MCF 10A (cell line): ENCODE measurements at regions of chr2 and their contacts with region 1.

Region 1: GRCh38 chr2:12702305-12703121 is 14.2 kb upstream of the TRIB2 start:
- DNase-seq: peak; percentile 91
- H3K4me3 Mint-ChIP-seq: peak overlapping the region; percentile 40
- H3K27ac Mint-ChIP-seq: peak overlapping the region; percentile 89
- H3K4me1 Mint-ChIP-seq: peaks cover 22% of the 10 kb centered on the region
- H3K27me3 Mint-ChIP-seq: no peaks in the 10 kb centered on the region
- CTCF ChIP-seq: no peak

Region 2: DNA sequence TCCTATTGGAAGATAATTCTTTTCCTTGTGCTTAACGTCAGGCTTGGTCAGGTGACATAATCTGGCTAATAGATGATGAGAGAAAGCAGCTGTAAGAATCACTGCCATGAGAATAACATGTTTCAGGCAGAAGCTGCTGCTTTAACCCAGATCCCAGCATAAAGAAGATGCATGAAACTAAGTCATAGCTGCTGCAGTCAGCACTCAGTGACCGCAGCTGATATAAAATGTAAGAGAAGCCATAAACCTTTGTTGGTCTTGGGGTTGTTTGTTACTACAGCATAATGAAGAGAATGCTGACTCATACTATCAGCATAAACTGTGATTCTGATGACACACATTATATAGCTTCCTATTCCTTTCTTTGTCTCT is 260.1 kb before region 1 on chr2:
- CTCF ChIA-PET with region 1: no interaction called
- POLR2A ChIA-PET with region 1: no interaction called
- intact Hi-C with region 1: loop called (anchors 5 kb)
- DNase-seq: no peak
- H3K4me3 Mint-ChIP-seq: no peak overlapping the region
- H3K27ac Mint-ChIP-seq: no peak overlapping the region
- H3K4me1 Mint-ChIP-seq: peaks cover 6% of the 10 kb centered on the region
- H3K27me3 Mint-ChIP-seq: no peaks in the 10 kb centered on the region
- CTCF ChIP-seq: no peak

Region 3: DNA sequence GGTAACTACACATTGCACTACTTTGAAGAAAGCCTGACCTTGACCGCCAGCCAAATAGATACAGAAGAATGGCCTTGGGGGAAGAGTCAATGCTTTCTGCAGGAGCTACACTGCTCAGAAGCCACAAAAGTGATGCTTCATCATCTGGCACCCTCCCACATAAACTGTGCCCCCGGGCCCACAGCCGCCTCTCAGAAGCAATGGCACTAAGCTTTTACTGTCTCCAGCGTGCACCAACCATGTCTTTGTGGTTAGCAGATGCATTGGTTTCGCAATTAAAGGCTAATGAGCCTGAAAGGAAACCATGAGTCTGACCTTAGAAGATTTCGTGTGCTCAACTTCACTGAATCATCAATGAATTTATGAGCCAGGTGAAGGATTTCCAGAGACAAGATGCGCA is 195.2 kb before region 1 on chr2:
- CTCF ChIA-PET with region 1: no interaction called
- POLR2A ChIA-PET with region 1: interaction called, 3 read pairs
- intact Hi-C with region 1: loop called (anchors 5 kb)
- DNase-seq: peak; percentile 99
- H3K4me3 Mint-ChIP-seq: no peak overlapping the region
- H3K27ac Mint-ChIP-seq: peak overlapping the region; percentile 22
- H3K4me1 Mint-ChIP-seq: peaks cover 38% of the 10 kb centered on the region
- H3K27me3 Mint-ChIP-seq: no peaks in the 10 kb centered on the region
- CTCF ChIP-seq: no peak

Region 4: GRCh38 chr2:12534646-12535263 is 167.8 kb before region 1 on chr2:
- CTCF ChIA-PET with region 1: no interaction called
- POLR2A ChIA-PET with region 1: interaction called, 10 read pairs
- intact Hi-C with region 1: no loop called
- DNase-seq: peak; percentile 77
- H3K4me3 Mint-ChIP-seq: peak overlapping the region; percentile 1
- H3K27ac Mint-ChIP-seq: peak overlapping the region; percentile 75
- H3K4me1 Mint-ChIP-seq: peaks cover 22% of the 10 kb centered on the region
- H3K27me3 Mint-ChIP-seq: no peaks in the 10 kb centered on the region
- CTCF ChIP-seq: no peak

Region 5: DNA sequence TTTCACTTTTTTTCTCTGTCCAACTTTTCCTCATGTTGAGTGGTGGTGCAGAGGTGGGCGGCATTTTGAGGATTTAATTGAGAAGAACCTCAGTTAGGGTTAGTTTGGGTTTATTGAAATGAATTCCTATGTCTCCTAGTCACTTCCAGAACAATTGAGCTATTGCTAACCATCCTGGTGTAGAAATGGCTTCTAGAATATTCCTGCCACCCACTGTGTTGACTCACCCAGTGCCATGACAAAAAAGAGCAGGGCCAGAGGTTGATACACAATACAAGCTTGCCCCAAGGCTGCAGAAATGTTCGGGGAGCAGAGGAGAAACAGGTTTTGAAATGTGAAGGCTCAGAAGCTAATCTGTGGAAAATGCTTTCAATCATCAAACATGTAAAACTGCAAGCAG is 152.9 kb before region 1 on chr2:
- CTCF ChIA-PET with region 1: no interaction called
- POLR2A ChIA-PET with region 1: no interaction called
- intact Hi-C with region 1: no loop called
- DNase-seq: peak; percentile 55
- H3K4me3 Mint-ChIP-seq: no peak overlapping the region
- H3K27ac Mint-ChIP-seq: no peak overlapping the region
- H3K4me1 Mint-ChIP-seq: peaks cover under 1% of the 10 kb centered on the region
- H3K27me3 Mint-ChIP-seq: no peaks in the 10 kb centered on the region
- CTCF ChIP-seq: no peak

Region 6: GRCh38 chr2:12684471-12684936 is 18.0 kb before region 1 on chr2:
- CTCF ChIA-PET with region 1: no interaction called
- POLR2A ChIA-PET with region 1: interaction called, 10 read pairs
- intact Hi-C with region 1: no loop called
- DNase-seq: peak; percentile 77
- H3K4me3 Mint-ChIP-seq: no peak overlapping the region
- H3K27ac Mint-ChIP-seq: no peak overlapping the region
- H3K4me1 Mint-ChIP-seq: peaks cover 10% of the 10 kb centered on the region
- H3K27me3 Mint-ChIP-seq: no peaks in the 10 kb centered on the region
- CTCF ChIP-seq: no peak

Region 7: DNA sequence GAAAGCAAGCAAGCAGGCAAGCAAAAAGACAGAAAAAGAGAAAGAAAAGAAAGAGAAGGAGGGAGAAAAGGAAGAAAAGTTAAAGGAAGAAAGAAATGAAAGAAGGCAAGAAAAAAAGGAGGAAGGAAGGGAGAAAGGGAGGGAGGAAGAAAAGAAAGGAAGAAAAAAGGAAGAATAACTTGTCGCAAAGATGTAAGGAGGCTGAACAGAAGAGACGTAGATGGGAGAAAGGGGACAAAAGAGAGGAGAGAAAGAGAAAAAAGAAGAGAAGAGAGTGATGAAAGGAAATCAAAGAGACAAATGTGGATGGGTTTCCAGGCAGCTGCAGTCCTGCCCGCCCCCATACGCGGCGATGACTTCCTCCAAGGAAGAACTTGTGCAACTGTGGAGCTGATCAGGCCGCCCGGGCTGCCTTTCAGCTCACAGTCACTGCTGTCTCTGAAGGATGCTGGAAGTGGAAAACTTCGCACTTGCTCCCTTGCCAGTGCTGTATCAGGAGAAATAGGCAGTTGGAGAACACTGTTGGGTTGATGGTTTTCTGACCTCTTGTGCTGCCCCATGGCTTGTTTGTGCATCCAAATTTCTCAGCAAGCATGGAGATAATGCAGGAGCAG is 67.1 kb after region 1 on chr2:
- CTCF ChIA-PET with region 1: no interaction called
- POLR2A ChIA-PET with region 1: no interaction called
- intact Hi-C with region 1: no loop called
- DNase-seq: no peak
- H3K4me3 Mint-ChIP-seq: no peak overlapping the region
- H3K27ac Mint-ChIP-seq: no peak overlapping the region
- H3K4me1 Mint-ChIP-seq: no peaks in the 10 kb centered on the region
- H3K27me3 Mint-ChIP-seq: peaks cover 34% of the 10 kb centered on the region
- CTCF ChIP-seq: no peak